ENCODE measurements at regions of chr5 and their contacts with region 1.

Region 1: DNA sequence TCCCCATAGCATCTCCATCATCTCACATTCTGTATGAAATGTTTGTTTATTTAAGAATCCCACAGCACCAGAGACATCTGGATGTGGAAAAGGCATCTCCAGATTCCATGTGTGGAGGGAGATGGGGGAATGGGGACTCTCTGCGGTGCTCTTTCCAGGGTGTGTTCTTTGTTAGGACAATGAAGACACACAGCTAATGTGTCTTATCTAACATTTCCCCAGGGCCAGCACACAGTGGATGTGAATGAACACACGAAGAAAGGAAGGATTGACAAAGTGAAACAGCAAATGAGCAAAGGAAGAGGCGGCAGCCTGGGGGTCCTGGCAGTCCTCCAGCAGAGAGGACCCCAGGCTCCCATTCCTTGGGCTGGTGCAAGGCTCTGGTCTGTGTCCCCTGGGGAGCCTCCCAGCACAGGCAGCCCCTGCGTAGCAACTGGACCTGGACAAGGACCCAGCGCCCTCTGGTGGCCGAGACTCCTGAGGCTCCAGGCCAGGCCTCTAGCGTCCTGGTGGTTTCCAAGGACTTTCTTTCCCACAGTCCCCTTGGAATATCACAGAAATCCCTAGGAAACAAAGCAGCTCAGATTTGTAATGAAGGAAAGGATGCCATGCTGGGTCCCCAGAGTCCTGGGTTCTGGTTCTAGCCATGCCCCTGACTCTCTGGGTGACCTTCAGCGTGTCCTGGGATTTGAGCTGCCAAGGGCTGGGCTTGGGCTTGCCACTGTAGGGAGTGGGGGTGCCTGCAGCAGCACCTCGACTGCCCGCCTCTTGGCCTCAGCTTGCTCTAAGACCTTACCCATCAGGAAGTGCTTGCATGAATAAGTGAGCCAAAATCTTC is 3.5 kb upstream of the PDLIM7 start:
- DNase-seq: peak; percentile 95
- H3K4me3 ChIP-seq: no peak overlapping the region
- H3K27ac ChIP-seq: peak overlapping the region; percentile 3 to 36
- H3K4me1 ChIP-seq: peaks cover 36% of the 10 kb centered on the region
- H3K27me3 ChIP-seq: no peaks in the 10 kb centered on the region
- CTCF ChIP-seq: peak; percentile 83 to 95 (median 88)
- POLR2A ChIP-seq: no peak

Region 2: GRCh38 chr5:177390363-177391300 is 110.3 kb before region 1 on chr5:
- intact Hi-C with region 1: loop called (anchors 10 kb)
- DNase-seq: peak; percentile 92
- H3K4me3 ChIP-seq: no peak overlapping the region
- H3K27ac ChIP-seq: no peak overlapping the region
- H3K4me1 ChIP-seq: no peaks in the 10 kb centered on the region
- H3K27me3 ChIP-seq: no peaks in the 10 kb centered on the region
- CTCF ChIP-seq: peak; percentile 96 to 98 (median 96)
- POLR2A ChIP-seq: no peak

Region 3: DNA sequence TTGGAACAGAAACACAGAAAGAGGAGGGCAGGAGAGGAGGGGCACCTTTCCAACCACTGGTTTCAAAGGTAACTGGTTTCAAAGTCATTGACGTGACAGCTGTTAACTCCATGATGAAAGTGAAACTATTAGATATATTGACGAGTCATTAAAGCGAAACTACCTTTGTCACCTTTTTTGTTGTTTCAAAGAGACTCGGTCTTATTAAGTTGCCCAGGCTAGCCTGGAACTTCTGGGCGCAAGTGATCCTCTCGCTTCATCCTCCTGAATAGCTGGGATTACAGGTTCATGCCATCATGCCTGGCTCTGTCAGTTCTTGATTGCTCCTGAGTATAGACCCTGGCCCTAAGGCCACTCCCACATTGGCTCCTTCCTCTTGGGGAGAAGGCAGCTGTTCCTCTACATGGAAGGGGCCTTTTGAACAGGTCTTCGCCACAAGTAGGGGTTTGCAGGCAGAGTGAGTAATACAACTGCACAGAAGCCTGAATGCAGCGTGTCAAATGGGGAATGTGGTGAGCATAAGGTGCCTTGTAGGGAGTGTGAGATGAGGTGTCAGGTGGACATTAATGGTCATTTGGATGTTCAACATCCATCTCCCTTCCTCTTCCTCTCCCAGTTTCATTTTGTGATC is 88.2 kb before region 1 on chr5:
- intact Hi-C with region 1: no loop called
- DNase-seq: no peak
- H3K4me3 ChIP-seq: no peak overlapping the region
- H3K27ac ChIP-seq: no peak overlapping the region
- H3K4me1 ChIP-seq: peaks cover 3% of the 10 kb centered on the region
- H3K27me3 ChIP-seq: no peaks in the 10 kb centered on the region
- CTCF ChIP-seq: no peak
- POLR2A ChIP-seq: no peak

Region 4: DNA sequence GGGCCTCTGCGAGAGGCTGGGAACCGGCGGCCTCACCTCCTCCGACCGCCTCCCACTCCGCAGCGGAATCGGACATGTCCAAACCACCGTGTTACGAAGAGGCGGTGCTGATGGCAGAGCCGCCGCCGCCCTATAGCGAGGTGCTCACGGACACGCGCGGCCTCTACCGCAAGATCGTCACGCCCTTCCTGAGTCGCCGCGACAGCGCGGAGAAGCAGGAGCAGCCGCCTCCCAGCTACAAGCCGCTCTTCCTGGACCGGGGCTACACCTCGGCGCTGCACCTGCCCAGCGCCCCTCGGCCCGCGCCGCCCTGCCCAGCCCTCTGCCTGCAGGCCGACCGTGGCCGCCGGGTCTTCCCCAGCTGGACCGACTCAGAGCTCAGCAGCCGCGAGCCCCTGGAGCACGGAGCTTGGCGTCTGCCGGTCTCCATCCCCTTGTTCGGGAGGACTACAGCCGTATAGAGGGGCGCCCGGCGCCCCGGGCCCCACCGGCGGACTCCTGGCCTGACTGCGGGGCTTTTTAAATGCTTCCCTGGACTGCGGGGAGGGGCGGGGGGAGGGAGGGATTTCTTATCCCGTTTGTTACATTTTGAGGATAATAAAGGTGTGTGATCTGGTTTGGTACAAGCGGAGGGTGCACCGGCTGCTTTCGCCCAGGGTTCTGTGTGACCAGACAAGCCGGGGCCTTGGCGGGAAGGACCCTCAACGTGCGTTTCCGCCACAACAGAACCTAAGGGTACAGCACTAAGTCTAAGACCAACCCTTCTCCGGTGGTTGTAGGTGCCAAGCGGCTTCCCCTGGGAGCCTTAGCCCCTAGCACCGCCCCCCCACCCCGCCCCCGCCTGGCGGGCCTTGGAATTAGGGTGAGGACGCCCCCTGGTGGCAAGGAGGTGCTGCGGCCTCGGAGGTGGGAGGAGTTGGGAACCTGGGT is 45.0 kb before region 1 on chr5:
- intact Hi-C with region 1: no loop called
- DNase-seq: peak; percentile 97
- H3K4me3 ChIP-seq: peak overlapping the region; percentile 58 to 66
- H3K27ac ChIP-seq: peak overlapping the region; percentile 21 to 64
- H3K4me1 ChIP-seq: peaks cover 14% of the 10 kb centered on the region
- H3K27me3 ChIP-seq: no peaks in the 10 kb centered on the region
- CTCF ChIP-seq: peak; percentile 68 to 97 (median 88)
- POLR2A ChIP-seq: no peak

Measured in testis (tissue), 5 donors.